ENCODE measurements at regions of chr15 and their contacts with region 1.

Region 1: GRCh38 chr15:44738340-44738984 is 2.1 kb downstream of the TRIM69 start:
- DNase-seq: no peak
- ATAC-seq: no peak
- H3K4me3 Mint-ChIP-seq: peak overlapping the region; percentile 38
- H3K27ac Mint-ChIP-seq: peak overlapping the region; percentile 47
- H3K4me1 Mint-ChIP-seq: peaks cover 47% of the 10 kb centered on the region
- H3K27me3 Mint-ChIP-seq: no peaks in the 10 kb centered on the region

Region 2: GRCh38 chr15:44286814-44287452 is 451.5 kb before region 1 on chr15:
- CTCF ChIA-PET with region 1: no interaction called
- POLR2A ChIA-PET with region 1: no interaction called
- intact Hi-C with region 1: no loop called
- DNase-seq: no peak
- ATAC-seq: no peak
- H3K4me3 Mint-ChIP-seq: peak overlapping the region; percentile 90
- H3K27ac Mint-ChIP-seq: peak overlapping the region; percentile 97
- H3K4me1 Mint-ChIP-seq: peaks cover 32% of the 10 kb centered on the region
- H3K27me3 Mint-ChIP-seq: peaks cover 2% of the 10 kb centered on the region

Region 3: DNA sequence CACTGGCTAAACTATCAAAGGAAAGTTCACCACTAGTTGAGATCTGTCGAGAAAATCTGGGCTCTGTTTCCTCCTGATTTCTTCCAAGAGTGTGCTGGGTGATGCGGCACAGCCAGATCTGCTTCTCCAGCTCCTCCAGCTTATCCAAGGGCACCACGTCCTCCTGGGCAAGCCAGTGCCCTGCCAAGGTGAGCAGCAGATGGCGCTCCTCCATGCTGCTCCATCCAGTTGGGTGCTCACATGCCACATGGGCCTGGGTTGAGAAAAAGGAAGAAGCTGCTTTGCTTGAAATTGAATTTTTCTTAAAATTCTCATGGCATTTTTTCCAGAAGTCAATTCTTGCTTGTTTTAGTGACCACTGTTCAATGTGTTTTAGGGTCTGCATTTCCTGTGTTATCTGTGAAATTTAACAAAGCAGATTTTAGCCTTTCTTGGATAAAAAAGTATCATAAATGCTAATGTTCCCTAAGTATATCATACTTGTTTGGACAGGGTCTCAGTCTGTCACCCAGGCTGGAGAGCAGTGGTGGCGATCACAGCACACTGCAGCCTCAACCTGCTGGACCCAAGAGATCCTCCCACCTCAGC is 154.2 kb before region 1 on chr15:
- CTCF ChIA-PET with region 1: interaction called, 113 read pairs
- POLR2A ChIA-PET with region 1: no interaction called
- intact Hi-C with region 1: loop called in 1 of 2 experiments (anchors 1 kb)
- DNase-seq: peak; percentile 81
- ATAC-seq: peak; percentile 97
- H3K4me3 Mint-ChIP-seq: no peak overlapping the region
- H3K27ac Mint-ChIP-seq: no peak overlapping the region
- H3K4me1 Mint-ChIP-seq: peaks cover 6% of the 10 kb centered on the region
- H3K27me3 Mint-ChIP-seq: no peaks in the 10 kb centered on the region

Region 4: DNA sequence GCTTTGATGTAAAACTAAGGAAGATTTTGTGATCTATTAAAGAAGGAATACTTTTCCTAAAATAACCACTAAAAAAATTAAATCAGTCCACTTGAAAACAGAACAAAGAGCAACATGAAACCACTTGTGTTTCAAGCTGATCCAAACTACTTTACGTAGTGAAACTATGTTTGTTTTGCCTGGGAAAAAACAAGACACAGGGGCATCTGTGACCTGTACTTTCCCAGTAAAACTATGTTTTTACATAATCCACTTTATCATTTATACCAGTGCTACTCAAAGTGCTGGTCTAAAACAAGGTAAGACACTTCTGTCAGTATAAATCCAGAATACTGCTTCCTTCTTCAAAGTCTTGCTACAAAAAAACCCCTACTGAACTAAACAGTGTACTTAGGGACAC is 131.7 kb before region 1 on chr15:
- CTCF ChIA-PET with region 1: interaction called, 13 read pairs
- POLR2A ChIA-PET with region 1: no interaction called
- intact Hi-C with region 1: no loop called
- DNase-seq: no peak
- ATAC-seq: no peak
- H3K4me3 Mint-ChIP-seq: no peak overlapping the region
- H3K27ac Mint-ChIP-seq: no peak overlapping the region
- H3K4me1 Mint-ChIP-seq: no peaks in the 10 kb centered on the region
- H3K27me3 Mint-ChIP-seq: no peaks in the 10 kb centered on the region

Region 5: GRCh38 chr15:44663409-44664308 is 74.8 kb before region 1 on chr15 and contains the start of gene SPG11:
- CTCF ChIA-PET with region 1: interaction called, 150 read pairs
- POLR2A ChIA-PET with region 1: interaction called, 45 read pairs
- intact Hi-C with region 1: loop called (anchors 1 kb)
- DNase-seq: peak; percentile 99
- ATAC-seq: peak; percentile 83
- H3K4me3 Mint-ChIP-seq: peak within 1 kb of the TSS; percentile 96
- H3K27ac Mint-ChIP-seq: peak within 1 kb of the TSS; percentile 98
- H3K4me1 Mint-ChIP-seq: peaks cover 57% of the 10 kb centered on the region
- H3K27me3 Mint-ChIP-seq: no peaks in the 10 kb centered on the region
- total RNA-seq, gene SPG11: 76.2 to 88.7 TPM

Region 6: DNA sequence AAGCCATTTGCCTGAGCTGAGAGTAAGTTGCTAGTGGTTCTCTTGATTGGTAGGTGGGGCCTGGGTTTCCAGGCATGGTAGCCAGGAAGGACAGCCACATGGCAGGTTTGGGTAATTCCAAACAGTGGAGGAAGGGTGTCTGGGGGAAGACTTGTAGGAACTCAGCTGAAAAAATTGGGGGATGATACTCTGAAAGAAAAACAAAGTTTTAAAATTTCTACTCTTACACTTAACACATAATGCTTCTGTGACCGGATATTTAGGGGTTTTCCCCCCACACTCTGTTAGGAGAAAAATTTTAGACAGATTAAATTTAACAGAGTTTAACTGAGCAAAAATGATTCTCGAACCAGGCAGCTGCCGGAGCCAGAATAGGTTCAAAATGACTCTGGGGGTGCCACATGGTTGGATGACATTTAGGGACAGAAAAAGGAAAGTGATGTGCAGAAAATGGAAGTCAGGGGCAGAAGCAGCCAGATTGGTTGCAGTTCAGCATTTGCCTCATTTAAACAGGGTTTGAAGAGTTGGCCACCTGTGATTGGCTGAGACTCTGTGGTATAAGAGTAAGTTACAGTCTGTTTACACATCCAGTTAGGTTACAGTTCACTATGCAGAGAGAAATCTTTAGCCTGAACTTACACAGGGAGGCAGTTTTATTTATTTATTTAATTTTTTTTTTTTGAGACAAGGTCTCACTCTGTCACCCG is 19.0 kb before region 1 on chr15:
- CTCF ChIA-PET with region 1: interaction called, 114 read pairs
- POLR2A ChIA-PET with region 1: interaction called, 474 read pairs
- intact Hi-C with region 1: no loop called
- DNase-seq: peak; percentile 85
- ATAC-seq: peak; percentile 73
- H3K4me3 Mint-ChIP-seq: peak overlapping the region; percentile 96
- H3K27ac Mint-ChIP-seq: peak overlapping the region; percentile 98
- H3K4me1 Mint-ChIP-seq: peaks cover 88% of the 10 kb centered on the region
- H3K27me3 Mint-ChIP-seq: no peaks in the 10 kb centered on the region

Region 7: GRCh38 chr15:44798826-44799225 is 60.4 kb after region 1 on chr15:
- CTCF ChIA-PET with region 1: no interaction called
- POLR2A ChIA-PET with region 1: no interaction called
- intact Hi-C with region 1: no loop called
- DNase-seq: no peak
- ATAC-seq: no peak
- H3K4me3 Mint-ChIP-seq: no peak overlapping the region
- H3K27ac Mint-ChIP-seq: no peak overlapping the region
- H3K4me1 Mint-ChIP-seq: peaks cover 4% of the 10 kb centered on the region
- H3K27me3 Mint-ChIP-seq: peaks cover 7% of the 10 kb centered on the region

Region 8: GRCh38 chr15:45212493-45212892 is 474.0 kb after region 1 on chr15:
- CTCF ChIA-PET with region 1: no interaction called
- POLR2A ChIA-PET with region 1: no interaction called
- intact Hi-C with region 1: no loop called
- DNase-seq: no peak
- ATAC-seq: no peak
- H3K4me3 Mint-ChIP-seq: no peak overlapping the region
- H3K27ac Mint-ChIP-seq: no peak overlapping the region
- H3K4me1 Mint-ChIP-seq: no peaks in the 10 kb centered on the region
- H3K27me3 Mint-ChIP-seq: peaks cover 5% of the 10 kb centered on the region